SK-N-SH (cell line): ENCODE measurements at regions of chr5 and their contacts with region 1.

Region 1: DNA sequence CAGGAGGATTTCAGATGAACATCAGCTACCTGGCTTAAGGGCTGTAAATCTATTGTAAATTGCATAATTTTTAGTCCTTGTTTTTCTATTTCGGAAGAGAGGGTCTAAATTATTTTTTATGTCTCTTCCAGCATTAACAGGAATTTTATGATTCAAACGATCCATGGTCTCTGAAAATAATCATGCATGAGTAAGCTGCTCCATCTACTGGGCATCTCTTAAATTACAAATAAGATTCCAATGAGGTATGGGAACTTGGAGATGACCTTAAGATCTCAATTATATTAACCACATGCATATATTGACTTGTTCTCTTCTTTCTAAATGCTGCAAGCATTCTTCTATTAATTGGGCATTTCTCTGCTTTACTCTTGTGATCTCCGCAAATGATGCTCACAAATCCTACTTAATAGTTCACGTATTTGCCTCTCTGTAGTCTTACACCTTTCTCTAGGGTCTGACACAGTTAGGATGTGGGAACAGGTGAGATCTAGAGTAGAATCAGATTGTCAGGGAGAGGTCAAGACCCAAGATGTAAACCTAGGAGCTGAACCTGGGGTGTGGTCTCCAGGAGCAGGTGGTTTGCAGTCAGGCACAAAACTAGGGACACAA is 86.9 kb downstream of the NUDT12 start:
- DNase-seq: peak; percentile 9
- H3K4me3 ChIP-seq: no peak overlapping the region; a peak in 1 of 4 replicates
- H3K27ac ChIP-seq: no peak overlapping the region
- H3K4me1 ChIP-seq: no peaks in the 10 kb centered on the region; a peak in 2 of 4 replicates
- H3K27me3 ChIP-seq: no peaks in the 10 kb centered on the region
- CTCF ChIP-seq: peak; percentile 82
- EP300 ChIP-seq: no peak
- RAD21 ChIP-seq: peak; percentile 93

Region 2: DNA sequence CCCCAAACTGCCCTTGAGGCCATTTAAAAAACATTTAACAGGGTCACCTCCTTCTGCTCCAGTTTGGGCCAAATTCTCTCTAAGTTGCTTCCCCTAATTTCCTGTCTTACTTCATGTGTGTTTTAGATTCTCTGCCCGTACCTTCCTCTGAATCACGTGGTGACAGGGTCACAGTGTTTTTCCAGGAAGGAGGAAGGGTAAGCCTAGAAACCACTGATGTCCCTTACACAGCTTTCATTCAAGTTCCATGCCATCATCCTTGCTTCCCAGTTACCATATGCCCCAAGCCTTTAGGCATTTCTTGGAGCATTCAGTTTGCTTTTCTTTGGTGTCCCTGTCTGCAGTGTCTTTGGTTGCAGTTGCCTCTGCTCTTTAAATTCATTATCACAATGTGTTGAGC is 259.6 kb before region 1 on chr5:
- CTCF ChIA-PET with region 1: interaction called, 24 read pairs
- POLR2A ChIA-PET with region 1: no interaction called
- DNase-seq: no peak
- H3K4me3 ChIP-seq: no peak overlapping the region
- H3K27ac ChIP-seq: no peak overlapping the region; a peak in 1 of 4 replicates
- H3K4me1 ChIP-seq: no peaks in the 10 kb centered on the region; a peak in 1 of 4 replicates
- H3K27me3 ChIP-seq: no peaks in the 10 kb centered on the region
- CTCF ChIP-seq: no peak
- EP300 ChIP-seq: no peak
- RAD21 ChIP-seq: no peak

Region 3: GRCh38 chr5:103224118-103224893 is 251.4 kb before region 1 on chr5:
- CTCF ChIA-PET with region 1: interaction called, 101 read pairs
- POLR2A ChIA-PET with region 1: no interaction called
- DNase-seq: peak; percentile 45
- H3K4me3 ChIP-seq: 0 out of 4 replicates have a peak overlapping the region, but pooled peaks of 1 of the 2 experiments have one; percentile 3
- H3K27ac ChIP-seq: no peak overlapping the region
- H3K4me1 ChIP-seq: no peaks in the 10 kb centered on the region
- H3K27me3 ChIP-seq: no peaks in the 10 kb centered on the region
- CTCF ChIP-seq: peak; percentile 65
- EP300 ChIP-seq: no peak
- RAD21 ChIP-seq: peak; percentile 80

Region 4: DNA sequence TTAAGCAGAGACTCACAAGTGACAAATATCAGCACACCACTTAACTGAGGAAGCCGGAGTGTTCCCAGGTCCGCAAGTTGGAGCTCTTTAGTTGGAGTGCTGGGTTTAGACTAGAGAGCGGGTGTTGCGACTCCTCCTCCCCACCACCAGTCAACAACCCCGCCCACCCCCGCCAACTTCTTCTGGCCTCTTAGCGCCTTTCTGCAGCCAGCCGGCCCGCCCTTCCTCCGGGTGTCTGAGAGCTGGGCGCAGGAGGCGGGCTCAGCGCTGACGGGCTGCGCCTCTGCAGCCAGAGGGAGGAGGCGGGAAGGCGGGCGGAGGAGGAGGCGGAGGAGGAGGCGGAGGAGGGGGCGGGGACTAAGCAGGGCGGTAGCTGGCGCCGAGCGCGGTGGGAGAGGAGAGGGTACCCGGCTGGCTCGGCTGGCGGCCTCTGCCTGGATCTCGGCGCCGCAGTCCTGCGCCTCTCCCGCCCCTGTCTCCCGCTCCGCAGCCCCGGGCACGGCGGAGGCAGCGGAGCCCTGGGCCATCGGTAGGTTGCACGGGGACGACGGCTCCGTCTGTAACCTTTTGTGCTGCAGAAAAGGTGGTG is 217.3 kb before region 1 on chr5 and contains the start of gene MACIR:
- CTCF ChIA-PET with region 1: interaction called, 19 read pairs
- POLR2A ChIA-PET with region 1: interaction called, 7 read pairs
- DNase-seq: peak; percentile 90
- H3K4me3 ChIP-seq: peak within 1 kb of the TSS; percentile 79 to 81
- H3K27ac ChIP-seq: peak within 1 kb of the TSS; percentile 80 to 96
- H3K4me1 ChIP-seq: peaks cover 3 to 8% of the 10 kb centered on the region in 2 experiments; a peak in 2 of 4 replicates
- H3K27me3 ChIP-seq: no peaks in the 10 kb centered on the region
- CTCF ChIP-seq: peak; percentile 12; the same call in 1 of the 2 replicates
- EP300 ChIP-seq: no peak
- RAD21 ChIP-seq: peak; percentile 23; the same call in 1 of the 2 replicates
- polyA plus RNA-seq, gene MACIR: 24.7 and 36.3 TPM in 2 replicates